Right ventricle myocardium superior (tissue), 1 donor: ENCODE measurements at regions of chr17 and their contacts with region 1.

Region 1: GRCh38 chr17:27245230-27245696 is 48.7 kb upstream of the WSB1 start:
- DNase-seq: peak; percentile 93
- ATAC-seq: peak; percentile 89

Region 2: GRCh38 chr17:27038676-27039075 is 206.6 kb before region 1 on chr17:
- intact Hi-C with region 1: no loop called
- DNase-seq: no peak
- ATAC-seq: no peak

Region 3: DNA sequence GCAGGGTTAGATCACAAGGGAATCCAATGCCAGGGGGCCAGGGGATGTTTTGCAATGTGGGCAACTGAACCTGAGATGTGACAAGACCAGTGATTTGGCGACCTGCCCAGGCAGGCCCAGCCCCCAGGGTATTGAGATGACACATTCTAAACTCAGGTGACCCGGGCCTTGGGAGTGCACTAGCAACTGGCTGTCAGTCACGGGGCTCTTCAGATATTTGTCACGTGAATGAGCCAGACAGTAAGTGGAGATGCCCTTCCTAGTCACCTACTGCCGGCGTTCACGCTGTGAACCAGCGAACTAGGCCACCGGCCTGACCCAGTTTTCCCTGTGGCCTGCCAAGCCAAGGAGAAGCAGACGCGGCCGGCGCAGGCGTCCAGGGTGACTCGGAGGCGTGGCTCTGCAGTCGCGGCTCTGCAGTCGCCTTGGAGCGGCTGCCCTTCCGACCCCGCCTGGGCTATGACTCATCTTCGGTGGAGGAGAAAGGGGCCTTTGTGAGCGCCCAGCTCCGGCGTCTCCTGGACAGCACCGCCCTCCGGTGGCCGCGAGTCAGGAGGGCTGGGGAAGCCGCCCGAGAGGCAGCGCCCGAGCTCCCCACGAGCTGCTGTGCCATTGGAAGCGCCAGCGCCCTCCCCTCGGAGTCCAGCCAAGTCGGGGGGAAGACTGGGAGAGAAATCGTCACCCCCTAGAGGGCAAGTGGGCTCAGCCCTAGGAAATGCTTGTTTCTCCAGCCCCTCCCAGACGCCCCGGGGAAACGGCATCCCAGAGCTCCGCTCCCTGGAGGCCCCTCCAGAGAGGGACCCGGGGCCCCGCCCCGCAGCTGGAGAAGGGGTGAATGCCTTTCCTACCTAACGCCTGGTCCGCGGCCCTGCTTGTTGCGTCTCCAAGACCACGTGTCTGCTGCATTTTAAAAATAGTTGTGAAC is 87.5 kb after region 1 on chr17:
- intact Hi-C with region 1: loop called (anchors 5 kb)
- DNase-seq: peak; percentile 99
- ATAC-seq: peak; percentile 97

Region 4: DNA sequence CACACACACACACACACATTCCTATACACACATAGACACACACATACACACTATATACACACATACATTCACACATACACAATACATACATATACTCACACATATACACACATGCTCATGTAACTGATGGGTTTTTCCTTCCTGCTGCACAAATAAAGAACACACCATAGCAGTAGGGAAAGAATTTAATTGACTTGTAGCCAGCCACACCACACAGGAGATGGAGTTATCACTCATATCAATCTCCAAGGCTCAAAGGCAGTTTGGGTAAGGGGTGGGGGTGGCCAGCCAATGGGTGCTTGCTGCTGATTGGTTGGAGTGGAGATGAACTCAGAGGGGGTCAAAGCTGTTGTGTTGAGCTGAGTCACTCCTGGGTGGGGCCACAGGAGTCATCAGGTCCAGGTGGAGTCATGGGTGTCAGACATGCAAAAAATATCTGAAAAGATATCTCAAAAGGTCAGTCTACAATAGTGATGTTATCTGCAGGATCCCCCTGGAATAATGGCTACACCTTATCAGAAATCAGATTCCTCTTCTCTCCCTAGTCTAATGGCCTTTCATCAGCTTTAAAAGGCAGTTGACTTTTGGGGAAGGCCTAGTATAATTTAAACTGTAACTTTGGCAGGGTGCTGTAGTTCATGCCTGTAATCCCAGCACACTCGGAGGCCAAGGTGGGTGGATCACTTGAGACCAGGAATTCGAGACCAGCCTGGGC is 94.7 kb after region 1 on chr17:
- intact Hi-C with region 1: loop called (anchors 5 kb)
- DNase-seq: no peak
- ATAC-seq: no peak